Panc1 (cell line): ENCODE measurements at regions of chr6 and their contacts with region 1.

Region 1: GRCh38 chr6:160160450-160160849 is 38.8 kb downstream of the SLC22A1 start:
- DNase-seq: no peak
- ATAC-seq: no peak
- H3K4me3 ChIP-seq: no peak overlapping the region
- H3K27ac ChIP-seq: no peak overlapping the region
- H3K4me1 ChIP-seq: no peaks in the 10 kb centered on the region
- H3K27me3 ChIP-seq: no peaks in the 10 kb centered on the region
- CTCF ChIP-seq: no peak

Region 2: DNA sequence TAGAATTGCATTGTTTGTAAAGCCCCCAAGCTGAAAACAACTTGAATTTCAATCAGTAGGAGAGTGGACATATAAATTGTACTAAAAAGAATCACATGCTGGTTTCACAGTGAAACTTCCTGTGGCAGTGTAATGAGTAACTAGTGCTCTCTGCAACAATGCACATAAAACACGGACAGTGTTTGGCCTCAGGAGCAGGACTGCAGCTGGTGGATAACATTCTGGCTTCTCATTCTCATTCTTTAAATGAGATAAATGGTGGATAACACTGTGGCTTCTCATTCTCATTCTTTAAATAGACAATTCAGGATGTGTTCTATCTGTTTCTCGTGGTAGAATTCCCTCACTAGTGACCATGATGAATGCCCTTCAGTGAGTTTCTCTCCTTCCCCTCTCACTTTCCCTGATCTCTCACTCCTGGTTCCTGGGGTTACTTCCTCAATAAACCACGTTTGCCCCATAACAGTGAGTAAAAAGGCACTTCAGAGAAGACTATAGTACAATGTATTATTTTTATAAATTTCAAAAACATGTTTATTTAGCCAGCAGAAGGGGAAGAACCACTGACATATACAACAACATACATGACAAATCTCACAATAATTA is 38.3 kb after region 1 on chr6:
- CTCF ChIA-PET with region 1: no interaction called
- POLR2A ChIA-PET with region 1: no interaction called
- in situ Hi-C with region 1: no loop called
- intact Hi-C with region 1: no loop called
- DNase-seq: no peak
- ATAC-seq: no peak
- H3K4me3 ChIP-seq: no peak overlapping the region
- H3K27ac ChIP-seq: no peak overlapping the region
- H3K4me1 ChIP-seq: no peaks in the 10 kb centered on the region
- H3K27me3 ChIP-seq: no peaks in the 10 kb centered on the region; the same call in 1 of the 2 replicates
- CTCF ChIP-seq: no peak

Region 3: GRCh38 chr6:161890133-161890831 is 1729.8 kb after region 1 on chr6:
- CTCF ChIA-PET with region 1: no interaction called
- POLR2A ChIA-PET with region 1: no interaction called
- in situ Hi-C with region 1: no loop called
- intact Hi-C with region 1: loop called (anchors 5 kb)
- DNase-seq: no peak
- ATAC-seq: no peak
- H3K4me3 ChIP-seq: no peak overlapping the region
- H3K27ac ChIP-seq: no peak overlapping the region
- H3K4me1 ChIP-seq: no peaks in the 10 kb centered on the region
- H3K27me3 ChIP-seq: peaks cover 2% of the 10 kb centered on the region; the same call in 1 of the 2 replicates
- CTCF ChIP-seq: no peak